ENCODE measurements at regions of chr16 and their contacts with region 1.

Region 1: DNA sequence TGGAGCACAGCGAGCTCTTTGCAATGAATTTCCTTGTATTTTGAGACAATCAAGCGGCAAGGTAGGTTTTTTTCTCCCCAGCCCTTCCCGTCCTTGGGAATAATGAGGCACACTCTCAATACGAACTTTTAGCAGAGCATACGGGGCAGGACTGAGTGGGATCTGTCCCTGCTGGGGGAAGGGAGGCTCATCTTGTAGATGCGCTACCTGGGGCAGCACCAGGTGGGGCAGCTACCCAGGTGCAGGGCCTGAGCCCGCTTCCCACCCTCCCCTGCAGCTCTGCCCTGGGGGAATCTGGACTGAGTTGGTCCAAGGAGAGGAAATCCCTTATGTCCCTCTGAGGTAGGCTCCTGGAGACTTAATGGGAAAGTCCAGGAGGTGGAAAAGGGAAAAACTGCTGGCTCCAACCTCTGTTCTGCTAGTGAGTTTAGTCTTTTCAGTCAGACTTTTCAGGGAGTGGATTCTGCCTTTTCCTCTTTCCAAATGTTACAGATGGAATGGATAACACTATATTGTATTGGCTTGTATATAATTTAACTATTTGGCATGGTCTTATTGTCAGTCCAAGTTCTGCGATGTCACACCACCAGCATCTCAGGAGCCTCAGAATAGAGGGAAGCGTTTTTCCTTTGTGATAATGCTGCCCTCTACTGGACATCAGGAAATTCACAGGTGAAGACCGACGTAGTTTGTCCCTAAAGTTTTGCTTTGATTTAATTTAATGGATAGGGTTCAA is 9.6 kb upstream of the CES1 start:
- DNase-seq: no peak

Region 2: DNA sequence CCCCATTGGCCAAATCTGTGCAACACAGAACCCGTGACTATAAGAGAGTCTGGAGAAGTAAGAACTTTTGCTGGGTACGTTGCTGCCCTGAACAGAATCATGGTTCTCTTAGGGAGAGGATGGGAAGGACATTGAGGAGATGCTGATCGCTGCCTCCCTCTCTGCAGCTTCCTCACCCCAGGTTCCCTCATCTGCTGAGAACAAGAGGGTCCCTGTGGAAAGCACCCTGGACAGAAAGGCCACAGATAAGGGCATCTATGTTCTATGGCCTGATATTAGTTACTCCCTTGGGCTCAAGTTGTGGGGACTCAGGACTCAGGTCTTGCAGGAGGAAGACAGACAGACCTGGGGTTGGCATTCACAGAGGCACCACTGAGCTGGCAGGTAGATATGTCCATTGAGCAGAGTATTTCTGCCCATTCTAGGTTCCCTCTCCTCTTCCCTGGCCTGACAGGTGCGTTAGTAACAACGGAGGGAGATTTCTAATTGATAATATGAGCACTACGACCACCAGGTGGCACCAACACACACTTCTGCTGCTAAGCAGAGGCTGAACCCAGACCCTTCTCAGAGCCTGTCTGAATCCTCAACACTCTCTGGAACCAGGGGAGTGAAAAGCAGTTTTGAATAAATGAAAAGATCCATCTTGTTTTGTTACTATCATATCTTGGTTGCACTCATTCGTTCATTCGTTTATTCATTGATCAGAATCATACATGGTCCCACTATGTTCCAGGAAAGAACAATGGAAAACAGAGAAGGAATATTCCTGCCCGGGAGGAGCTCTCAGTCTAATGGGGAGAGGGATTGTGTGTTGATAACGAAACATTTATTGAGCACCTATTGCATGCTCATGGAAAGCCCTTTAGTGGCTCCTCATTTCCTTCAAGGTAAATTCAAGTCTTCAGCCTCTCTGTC is 130.3 kb before region 1 on chr16:
- intact Hi-C with region 1: loop called (anchors 5 kb)
- DNase-seq: no peak

Region 3: DNA sequence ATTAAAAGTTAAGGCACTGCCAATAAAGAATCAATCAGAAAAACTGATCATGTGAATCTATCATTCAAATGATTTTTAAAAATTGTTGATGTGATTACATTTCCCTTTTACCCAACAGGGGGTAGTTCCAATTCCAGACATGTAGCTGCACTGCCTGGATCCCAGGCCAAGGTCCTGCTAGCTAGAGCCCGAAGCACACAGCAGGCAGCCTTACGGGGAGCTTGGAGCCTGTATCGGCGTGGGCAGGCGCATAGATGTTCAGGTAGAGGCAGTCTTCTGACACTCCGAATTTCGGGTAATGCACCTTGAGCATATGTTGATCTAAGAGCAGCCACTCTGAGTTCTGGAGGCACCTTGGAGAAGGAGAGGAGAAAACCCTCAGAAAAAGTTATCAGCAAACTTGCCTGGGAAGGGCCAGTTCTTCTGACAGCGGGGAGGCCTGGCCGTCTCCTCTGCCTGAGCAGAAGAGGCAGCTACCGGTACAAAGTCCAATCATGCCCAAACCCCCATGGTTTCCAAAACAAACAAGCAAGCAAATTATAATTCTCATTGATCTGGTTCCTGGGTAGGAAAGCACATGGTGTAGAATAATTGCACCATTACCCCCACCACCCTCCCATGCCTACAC is 29.0 kb after region 1 on chr16:
- intact Hi-C with region 1: no loop called
- DNase-seq: no peak

Measured in posterior vena cava (tissue), 2 donors.